ENCODE measurements at regions of chr1 and their contacts with region 1.

Region 1: DNA sequence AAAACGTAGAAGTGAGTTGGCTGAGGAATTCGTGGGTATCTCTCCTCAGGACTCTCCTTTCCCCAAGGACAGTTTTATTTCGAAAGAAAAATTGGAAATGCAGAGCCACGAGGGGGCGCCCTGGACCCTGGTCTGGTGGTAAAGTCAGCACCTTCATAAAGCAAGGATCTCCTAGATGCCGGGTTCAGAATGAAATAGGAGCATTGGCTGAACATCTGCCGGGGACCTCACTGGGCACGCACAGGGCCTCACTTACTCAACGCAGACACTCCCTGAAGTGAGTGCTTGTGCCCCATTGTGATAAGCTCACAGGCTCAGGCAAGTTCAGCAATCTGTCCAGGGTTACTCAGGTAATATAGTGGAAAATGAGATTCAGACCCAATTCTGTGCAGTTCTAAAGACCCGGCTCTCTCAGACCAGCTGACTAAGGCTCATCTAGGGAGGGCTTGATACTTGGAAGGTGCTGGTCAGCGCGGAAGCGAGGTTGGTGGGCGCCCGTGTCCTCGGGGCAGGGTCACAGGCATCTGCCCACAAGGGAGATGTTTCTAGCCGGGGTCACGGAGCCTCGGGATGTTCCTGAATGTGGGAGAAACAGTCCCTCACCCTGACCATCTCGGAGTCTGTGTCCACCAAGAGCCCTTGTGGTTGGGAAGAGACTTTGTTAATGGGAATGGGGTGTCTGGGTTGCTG is 55.7 kb upstream of the ETV3 start:
- DNase-seq: peak; percentile 76

Region 2: GRCh38 chr1:156892190-156893047 is 301.4 kb before region 1 on chr1:
- in situ Hi-C with region 1: no loop called
- DNase-seq: peak; percentile 91

Region 3: GRCh38 chr1:157369808-157370521 is 176.1 kb after region 1 on chr1:
- in situ Hi-C with region 1: loop called (anchors 25 kb)
- DNase-seq: peak; percentile 81

Region 4: GRCh38 chr1:157419845-157420542 is 226.1 kb after region 1 on chr1:
- in situ Hi-C with region 1: no loop called
- DNase-seq: no peak

Region 5: DNA sequence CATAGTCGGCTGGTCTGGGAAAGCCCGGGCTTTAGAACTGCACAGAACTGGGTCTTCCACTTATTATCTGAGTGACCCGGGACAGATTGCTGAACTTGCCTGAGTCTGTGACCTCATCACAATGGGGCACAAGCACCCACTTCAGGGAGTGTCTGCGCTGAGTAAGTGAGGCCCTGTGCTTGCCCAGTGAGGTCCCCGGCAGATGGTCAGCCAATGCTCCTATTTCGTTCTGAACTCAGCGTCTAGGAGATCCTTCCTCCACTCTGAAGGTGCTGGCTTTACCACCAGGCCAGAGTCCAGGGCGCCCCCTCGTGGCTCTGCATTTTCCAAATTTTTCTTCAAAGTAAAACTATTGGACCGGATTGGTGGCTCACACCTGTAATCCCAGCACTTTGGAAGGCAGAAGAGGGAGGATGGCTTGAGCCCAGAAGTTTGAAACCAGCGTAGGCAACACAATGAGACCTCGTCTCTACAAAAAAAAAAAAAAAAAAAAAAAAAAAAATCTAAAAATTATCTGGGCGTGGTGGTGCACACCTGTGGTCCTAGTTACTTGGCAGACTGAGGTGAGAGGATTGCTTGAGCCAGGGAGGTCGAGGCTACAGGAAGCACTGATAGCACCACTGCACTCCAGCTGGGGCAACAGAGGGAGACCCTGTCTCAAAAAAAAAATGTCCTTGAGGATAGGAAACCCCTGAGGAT is 296.8 kb after region 1 on chr1:
- in situ Hi-C with region 1: loop called (anchors 10 kb)
- DNase-seq: peak; percentile 78